OCI-LY7 (cell line): ENCODE measurements at regions of chr19 and their contacts with region 1.

Region 1: DNA sequence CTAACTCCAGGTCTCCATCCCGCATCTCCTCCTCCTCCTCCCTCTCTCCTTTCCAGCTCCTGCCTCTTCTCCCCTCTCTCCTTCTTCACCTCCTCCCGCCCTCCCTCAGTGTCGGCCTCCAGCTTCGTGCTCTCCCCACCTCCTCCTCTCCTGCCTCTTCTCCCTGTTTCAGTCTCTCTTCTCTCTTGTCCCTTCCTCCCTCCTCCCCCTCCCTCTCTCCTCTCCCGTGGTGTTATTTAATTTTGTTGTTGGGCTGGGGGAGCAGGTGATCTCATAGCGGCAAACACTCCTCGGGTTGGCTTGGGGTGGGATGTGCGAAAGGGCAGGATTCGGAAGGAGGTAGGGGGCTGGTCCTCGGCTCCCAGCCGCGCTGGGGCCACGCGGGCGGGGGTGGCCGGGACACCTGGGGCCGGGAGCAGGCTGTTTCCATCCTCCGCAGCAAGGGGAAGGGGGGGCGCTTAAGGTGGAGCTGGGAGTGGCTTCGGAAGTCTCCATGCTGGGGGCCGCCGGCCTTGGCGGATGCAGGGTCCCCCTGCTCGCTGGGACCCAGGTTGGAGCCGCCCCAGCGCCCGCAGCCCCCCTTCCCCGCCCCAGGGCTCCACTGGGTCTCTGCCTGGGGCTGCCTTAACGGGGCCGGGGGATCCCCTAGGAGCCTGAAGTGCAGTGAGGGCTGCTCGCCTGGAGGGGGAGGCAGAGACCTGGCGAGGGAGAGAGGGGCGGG is at the start of gene CA11:
- DNase-seq: peak; percentile 92
- H3K4me3 ChIP-seq: peak within 1 kb of the TSS; percentile 66
- H3K27ac ChIP-seq: peak within 1 kb of the TSS; percentile 25
- H3K4me1 ChIP-seq: peaks cover 29% of the 10 kb centered on the region
- CTCF ChIP-seq: peak; percentile 83
- total RNA-seq, gene CA11: 2.5 and 2.7 TPM in 2 replicates

Region 2: DNA sequence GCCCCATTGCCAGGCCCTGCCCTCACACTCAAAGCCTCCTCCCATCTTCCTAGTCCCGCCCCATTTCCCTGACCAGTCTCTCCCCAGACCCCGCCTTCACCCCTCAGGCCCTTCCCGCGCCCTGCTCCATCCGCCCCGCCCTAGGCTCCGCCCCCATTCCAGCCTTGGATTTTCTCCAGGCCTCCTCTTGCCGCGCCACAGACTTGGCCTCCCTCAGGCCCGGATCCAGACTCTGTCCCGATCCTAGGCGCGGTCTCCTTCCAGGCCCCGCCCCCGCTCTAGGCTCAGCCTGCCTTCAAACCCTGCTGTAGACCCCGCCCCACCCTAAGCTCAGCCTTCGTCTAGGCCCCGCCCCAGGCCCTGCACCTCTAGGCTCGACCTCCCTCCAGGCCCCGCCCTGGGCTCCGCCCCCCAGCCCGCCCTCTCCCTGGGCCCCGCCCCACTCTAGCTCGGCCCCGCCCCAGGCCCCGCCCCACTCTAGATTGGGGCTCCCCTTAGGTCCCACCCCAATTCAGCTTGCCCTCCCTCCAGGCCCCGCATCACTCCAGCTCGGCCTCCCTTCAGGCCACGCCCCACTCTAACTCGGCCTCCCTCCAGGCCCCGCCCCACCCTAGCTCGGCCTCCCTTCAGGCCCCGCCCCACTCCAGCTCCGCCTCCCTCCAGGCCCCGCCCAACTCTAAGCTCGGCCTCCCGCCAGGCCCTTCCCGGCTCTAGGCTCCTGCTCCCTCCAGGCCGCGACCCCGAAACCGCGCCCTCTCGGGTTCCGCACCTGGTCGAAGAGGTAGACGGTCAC is 153.0 kb before region 1 on chr19:
- CTCF ChIA-PET with region 1: interaction called, 11 read pairs
- POLR2A ChIA-PET with region 1: interaction called, 4 read pairs
- intact Hi-C with region 1: no loop called
- DNase-seq: peak; percentile 98
- H3K4me3 ChIP-seq: peak overlapping the region; percentile 63
- H3K27ac ChIP-seq: peak overlapping the region; percentile 41
- H3K4me1 ChIP-seq: peaks cover 31% of the 10 kb centered on the region
- CTCF ChIP-seq: no peak

Region 3: GRCh38 chr19:48674921-48675824 is 29.0 kb after region 1 on chr19:
- CTCF ChIA-PET with region 1: no interaction called
- POLR2A ChIA-PET with region 1: no interaction called
- intact Hi-C with region 1: loop called (anchors 1 kb)
- DNase-seq: peak; percentile 85
- H3K4me3 ChIP-seq: no peak overlapping the region
- H3K27ac ChIP-seq: no peak overlapping the region
- H3K4me1 ChIP-seq: peaks cover 2% of the 10 kb centered on the region
- CTCF ChIP-seq: peak; percentile 93

Region 4: DNA sequence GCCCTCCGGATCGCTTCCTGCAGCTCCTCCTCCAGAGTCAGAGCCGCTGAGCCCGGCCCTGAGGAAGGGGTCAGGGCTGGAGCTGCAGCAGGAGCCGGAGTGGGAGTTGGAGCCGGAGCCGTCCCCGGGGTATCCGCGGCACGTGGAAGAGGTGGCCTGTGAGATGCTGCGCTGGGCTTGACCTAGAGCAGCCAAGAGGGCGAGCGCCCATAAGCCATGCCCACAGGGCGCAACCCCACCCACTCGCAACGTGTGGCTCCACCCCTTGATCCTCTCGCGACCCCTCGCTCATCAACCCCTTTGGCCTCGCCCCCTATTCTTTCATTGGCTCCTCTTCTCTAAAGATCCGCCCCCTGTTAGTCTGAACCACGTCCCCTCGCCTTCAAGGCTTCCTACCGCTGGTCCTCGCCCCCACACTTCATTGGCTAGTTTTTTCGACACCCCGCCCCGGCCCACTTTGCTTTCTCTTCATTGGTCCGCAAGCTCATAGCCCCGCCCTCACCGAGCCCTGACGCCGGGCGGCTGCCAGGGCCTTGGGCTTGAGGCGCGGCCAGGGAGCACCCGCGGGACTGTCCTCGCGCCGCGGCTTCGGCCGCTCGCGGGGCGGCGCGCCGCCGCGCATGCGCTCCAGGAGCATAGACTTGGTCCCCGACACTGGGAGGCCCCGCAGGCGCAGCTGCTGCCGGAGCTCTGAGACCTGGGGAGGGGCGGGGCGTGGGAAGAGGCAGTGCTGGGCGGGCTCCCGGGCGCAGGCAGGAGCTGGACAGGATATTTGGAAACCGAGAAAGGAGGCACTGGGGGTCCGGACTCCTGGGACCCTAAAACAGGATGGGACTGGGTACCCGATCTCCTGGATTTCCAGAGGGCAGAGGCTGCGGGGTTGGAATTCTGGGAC is 68.0 kb after region 1 on chr19:
- CTCF ChIA-PET with region 1: no interaction called
- POLR2A ChIA-PET with region 1: interaction called, 4 read pairs
- intact Hi-C with region 1: loop called (anchors 1 kb)
- DNase-seq: peak; percentile 99
- H3K4me3 ChIP-seq: peak overlapping the region; percentile 74
- H3K27ac ChIP-seq: peak overlapping the region; percentile 33
- H3K4me1 ChIP-seq: peaks cover 22% of the 10 kb centered on the region
- CTCF ChIP-seq: no peak

Region 5: DNA sequence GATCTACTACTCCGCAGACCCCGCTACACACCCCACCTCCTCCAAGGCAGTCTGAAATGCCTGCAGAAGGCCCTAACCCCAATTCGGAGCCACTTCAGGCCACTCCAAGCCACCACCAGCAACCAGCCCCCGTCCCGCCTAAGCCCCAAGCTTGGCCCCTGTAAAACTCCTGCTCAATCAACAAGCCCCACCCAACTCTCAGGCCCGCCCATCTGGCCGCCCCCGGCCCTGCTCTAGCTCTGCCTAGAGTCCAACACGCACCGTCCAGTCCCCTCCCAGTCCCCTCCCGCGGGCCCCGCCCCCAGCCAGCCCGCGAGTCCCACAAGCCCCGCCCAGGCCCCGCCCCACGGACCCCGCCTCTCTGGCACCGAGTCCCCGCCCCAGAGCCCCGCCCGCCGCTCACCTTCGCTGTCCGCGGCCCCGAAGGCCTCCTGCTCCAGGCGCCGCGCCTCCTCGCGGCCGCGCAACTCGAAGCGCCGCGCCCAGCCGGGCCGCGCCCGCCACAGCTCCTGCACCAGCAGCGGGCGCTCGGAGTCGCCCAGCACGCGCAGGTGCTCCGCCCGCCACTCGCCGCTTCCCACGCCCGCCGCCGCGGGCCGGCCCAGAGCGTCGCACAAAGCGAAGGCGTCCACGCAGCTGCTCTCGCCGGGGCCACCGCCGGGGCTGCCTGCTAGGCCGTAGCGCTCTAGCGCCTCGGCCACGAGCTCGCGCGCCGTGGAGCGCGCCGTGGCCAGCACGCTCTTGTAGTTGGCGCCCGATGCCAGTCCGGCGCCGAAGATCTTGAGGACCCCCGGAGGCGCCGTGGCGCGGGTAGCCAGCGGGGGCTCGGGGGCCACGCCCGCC is 92.6 kb after region 1 on chr19:
- CTCF ChIA-PET with region 1: no interaction called
- POLR2A ChIA-PET with region 1: no interaction called
- intact Hi-C with region 1: loop called (anchors 5 kb)
- DNase-seq: peak; percentile 87
- H3K4me3 ChIP-seq: no peak overlapping the region
- H3K27ac ChIP-seq: no peak overlapping the region
- H3K4me1 ChIP-seq: peaks cover 20% of the 10 kb centered on the region
- CTCF ChIP-seq: peak; percentile 53; the same call in 1 of the 2 replicates

Region 6: GRCh38 chr19:48784540-48784939 is 138.4 kb after region 1 on chr19:
- CTCF ChIA-PET with region 1: no interaction called
- POLR2A ChIA-PET with region 1: no interaction called
- intact Hi-C with region 1: loop called (anchors 2 kb)
- DNase-seq: no peak
- H3K4me3 ChIP-seq: no peak overlapping the region
- H3K27ac ChIP-seq: no peak overlapping the region
- H3K4me1 ChIP-seq: peaks cover 7% of the 10 kb centered on the region
- CTCF ChIP-seq: no peak

Region 7: DNA sequence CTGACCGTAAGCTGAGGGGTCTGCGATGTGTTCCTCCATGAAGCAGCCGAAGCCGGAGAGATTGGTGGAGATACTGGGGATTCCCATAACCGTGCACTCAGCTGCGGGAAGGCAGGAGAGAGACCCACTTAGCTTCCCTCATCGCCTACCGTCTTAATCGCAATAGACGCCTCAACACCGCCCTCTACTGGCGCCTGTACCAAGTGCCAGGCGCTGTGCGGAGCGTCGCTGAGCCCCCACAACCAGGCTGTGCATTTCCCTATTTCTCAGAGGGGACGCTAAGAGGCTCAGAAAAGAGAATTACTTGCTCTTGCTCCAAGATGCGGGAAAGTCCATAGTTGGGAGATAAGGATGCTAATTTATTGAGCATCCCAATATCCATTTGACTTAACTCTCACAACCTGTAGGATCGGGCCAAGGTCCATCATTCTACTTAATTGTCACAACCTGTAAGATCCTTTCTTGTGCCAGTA is 324.8 kb after region 1 on chr19:
- CTCF ChIA-PET with region 1: no interaction called
- POLR2A ChIA-PET with region 1: no interaction called
- intact Hi-C with region 1: loop called (anchors 5 kb)
- DNase-seq: peak; percentile 90
- H3K4me3 ChIP-seq: no peak overlapping the region
- H3K27ac ChIP-seq: no peak overlapping the region
- H3K4me1 ChIP-seq: peaks cover 41% of the 10 kb centered on the region
- CTCF ChIP-seq: peak; percentile 96